Gastrocnemius medialis (tissue), 4 donors: ENCODE measurements at regions of chr12 and their contacts with region 1.

Region 1: DNA sequence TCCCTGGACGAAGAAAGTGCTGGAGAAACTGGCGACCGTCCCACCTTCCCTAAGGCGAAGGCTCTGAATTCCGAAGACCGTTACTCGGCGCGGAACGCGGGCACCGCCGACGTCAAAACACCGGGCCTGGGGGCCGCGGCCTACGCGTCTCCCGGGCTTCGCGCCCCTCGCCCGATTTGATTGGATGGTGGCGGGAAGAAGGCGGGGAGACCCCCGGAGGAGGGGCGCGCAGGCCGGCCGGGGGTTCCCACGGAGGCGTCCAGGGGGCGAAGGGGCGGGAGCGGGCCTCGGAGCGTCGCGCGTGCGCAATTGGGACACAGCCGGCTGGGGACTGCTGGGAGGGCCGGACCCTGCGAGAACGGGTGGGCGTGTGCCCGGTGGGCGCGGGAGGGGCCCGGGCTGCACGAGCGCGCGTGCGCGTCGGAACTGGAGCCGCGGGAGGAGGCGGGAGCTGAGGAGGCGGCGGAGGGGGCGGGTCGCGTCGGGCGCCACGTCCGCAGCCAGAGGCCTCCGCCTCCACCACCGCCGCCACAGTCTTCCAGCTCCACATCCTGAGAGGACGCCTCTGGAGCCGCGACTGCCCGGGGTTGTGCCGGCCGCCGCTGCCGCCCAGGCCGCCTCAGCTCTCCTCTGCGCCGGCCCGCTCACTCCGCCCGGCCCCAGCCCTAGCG is at the start of gene TMEM263:
- DNase-seq: peak; percentile 89 to 91
- ATAC-seq: peak; percentile 78 to 82
- H3K4me3 ChIP-seq: peak within 1 kb of the TSS; percentile 66 to 92 (median 80)
- H3K27ac ChIP-seq: peak within 1 kb of the TSS; percentile 87 to 97 (median 92)
- H3K4me1 ChIP-seq: peaks cover 20 to 27% of the 10 kb centered on the region in 2 donors
- H3K27me3 ChIP-seq: no peaks in the 10 kb centered on the region
- CTCF ChIP-seq: peak in 1 of 5 experiments; percentile 7
- POLR2A ChIP-seq: peak; percentile 88 to 94
- total RNA-seq, gene TMEM263: 8.9 to 26.7 (median 15.9) TPM

Region 2: DNA sequence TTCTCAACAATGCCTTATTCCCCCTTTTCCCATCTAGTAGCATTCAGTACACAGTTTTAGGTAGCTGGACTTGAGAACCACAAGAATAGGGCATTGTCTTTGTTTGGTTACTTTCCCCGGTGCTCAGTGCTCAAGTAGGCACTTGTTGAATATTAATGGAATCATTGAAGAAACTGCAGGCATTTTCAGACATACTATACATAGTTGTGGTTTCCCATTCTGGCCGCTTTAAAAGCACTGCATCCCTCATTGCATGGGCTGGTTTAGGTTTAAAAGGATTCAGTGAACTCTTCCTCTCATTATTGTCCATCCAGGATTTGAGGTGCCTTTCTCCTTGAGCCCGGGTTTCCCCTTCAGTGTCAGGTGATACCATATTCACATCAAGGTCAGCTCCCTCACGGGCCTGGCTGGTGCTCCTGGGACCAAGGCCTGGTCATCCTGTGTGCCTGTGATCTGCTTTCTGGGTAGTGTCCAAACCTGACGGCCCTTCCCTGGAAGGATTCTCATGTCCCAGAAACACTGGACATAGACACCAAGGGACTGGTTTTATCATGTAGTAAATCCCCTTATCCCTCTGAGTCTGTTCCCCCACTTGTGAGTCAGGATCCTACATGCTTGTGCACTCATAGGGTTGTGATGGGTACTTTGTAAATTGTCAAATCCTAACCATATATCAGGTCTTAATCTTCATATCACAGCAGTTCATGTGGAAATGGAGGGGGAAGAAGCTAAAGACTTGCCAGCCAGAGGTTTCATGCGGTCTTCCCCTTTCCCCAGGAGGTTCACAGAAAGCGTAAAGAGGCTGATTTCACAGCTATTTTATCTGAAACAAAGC is 645.6 kb before region 1 on chr12:
- in situ Hi-C with region 1: no loop called
- intact Hi-C with region 1: loop called (anchors 5 kb)
- DNase-seq: peak; percentile 36 to 74
- ATAC-seq: peak; percentile 25 to 45
- H3K4me3 ChIP-seq: no peak overlapping the region
- H3K27ac ChIP-seq: peak overlapping the region; percentile 91 to 97 (median 94)
- H3K4me1 ChIP-seq: peaks cover 76 to 77% of the 10 kb centered on the region in 2 donors
- H3K27me3 ChIP-seq: no peaks in the 10 kb centered on the region
- CTCF ChIP-seq: no peak
- POLR2A ChIP-seq: no peak

Region 3: GRCh38 chr12:106774005-106774807 is 181.3 kb before region 1 on chr12 and contains the start of gene RIC8B:
- in situ Hi-C with region 1: no loop called
- intact Hi-C with region 1: loop called (anchors 5 kb)
- DNase-seq: peak; percentile 95 to 96
- ATAC-seq: peak; percentile 99
- H3K4me3 ChIP-seq: peak within 1 kb of the TSS; percentile 79 to 97 (median 86)
- H3K27ac ChIP-seq: peak within 1 kb of the TSS; percentile 94 to 95 (median 94)
- H3K4me1 ChIP-seq: peaks cover 14 to 18% of the 10 kb centered on the region in 2 donors
- H3K27me3 ChIP-seq: no peaks in the 10 kb centered on the region
- CTCF ChIP-seq: no peak
- POLR2A ChIP-seq: peak; percentile 73 to 80
- total RNA-seq, gene RIC8B: 6.1 to 16.0 (median 10.0) TPM

Region 4: GRCh38 chr12:106986625-106987430 is 31.3 kb after region 1 on chr12 and contains the start of gene MTERF2:
- in situ Hi-C with region 1: no loop called
- intact Hi-C with region 1: loop called (anchors 1 kb)
- DNase-seq: peak; percentile 95
- ATAC-seq: peak; percentile 96 to 97
- H3K4me3 ChIP-seq: peak within 1 kb of the TSS; percentile 69 to 90 (median 74)
- H3K27ac ChIP-seq: peak within 1 kb of the TSS; percentile 87 to 98 (median 93)
- H3K4me1 ChIP-seq: peaks cover 17 to 18% of the 10 kb centered on the region in 2 donors
- H3K27me3 ChIP-seq: no peaks in the 10 kb centered on the region
- CTCF ChIP-seq: no peak
- POLR2A ChIP-seq: peak; percentile 77 to 86
- total RNA-seq, gene MTERF2: 5.0 to 24.6 (median 13.7) TPM

Region 5: DNA sequence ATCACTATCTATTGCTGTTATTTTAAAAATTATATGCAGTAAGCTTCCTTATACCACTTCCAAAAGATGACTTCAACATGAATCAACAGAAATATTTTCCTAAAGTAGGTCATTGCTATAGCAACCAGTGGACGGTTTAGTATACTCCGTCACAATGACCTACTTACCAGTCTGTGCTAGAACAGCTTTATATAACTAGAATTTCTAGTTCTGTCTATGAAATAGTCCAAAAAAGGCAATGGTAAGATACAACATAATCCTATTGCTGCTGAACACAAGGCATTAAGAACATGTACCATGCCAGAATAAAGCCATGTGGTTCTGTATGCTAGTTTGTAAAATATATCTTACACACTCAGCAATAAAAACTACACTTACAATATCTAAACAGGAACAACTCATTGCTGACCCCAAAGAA is 72.1 kb after region 1 on chr12:
- in situ Hi-C with region 1: no loop called
- intact Hi-C with region 1: loop called (anchors 1 kb)
- DNase-seq: peak; percentile 9 to 23
- ATAC-seq: peak; percentile 98 to 99
- H3K4me3 ChIP-seq: peak overlapping the region; percentile 11 to 39 (median 32)
- H3K27ac ChIP-seq: peak overlapping the region; percentile 76 to 89 (median 84)
- H3K4me1 ChIP-seq: peaks cover 47 to 62% of the 10 kb centered on the region in 2 donors
- H3K27me3 ChIP-seq: no peaks in the 10 kb centered on the region
- CTCF ChIP-seq: no peak
- POLR2A ChIP-seq: peak in 1 of 2 donors; percentile 28

Region 6: GRCh38 chr12:107109741-107110719 is 154.5 kb after region 1 on chr12:
- in situ Hi-C with region 1: loop called in 1 of 4 experiments (anchors 10 kb)
- intact Hi-C with region 1: no loop called
- DNase-seq: no peak
- ATAC-seq: no peak
- H3K4me3 ChIP-seq: no peak overlapping the region
- H3K27ac ChIP-seq: no peak overlapping the region
- H3K4me1 ChIP-seq: no peaks in the 10 kb centered on the region
- H3K27me3 ChIP-seq: no peaks in the 10 kb centered on the region
- CTCF ChIP-seq: no peak
- POLR2A ChIP-seq: no peak